GM10248 (cell line): ENCODE measurements at regions of chr5 and their contacts with region 1.

Region 1: DNA sequence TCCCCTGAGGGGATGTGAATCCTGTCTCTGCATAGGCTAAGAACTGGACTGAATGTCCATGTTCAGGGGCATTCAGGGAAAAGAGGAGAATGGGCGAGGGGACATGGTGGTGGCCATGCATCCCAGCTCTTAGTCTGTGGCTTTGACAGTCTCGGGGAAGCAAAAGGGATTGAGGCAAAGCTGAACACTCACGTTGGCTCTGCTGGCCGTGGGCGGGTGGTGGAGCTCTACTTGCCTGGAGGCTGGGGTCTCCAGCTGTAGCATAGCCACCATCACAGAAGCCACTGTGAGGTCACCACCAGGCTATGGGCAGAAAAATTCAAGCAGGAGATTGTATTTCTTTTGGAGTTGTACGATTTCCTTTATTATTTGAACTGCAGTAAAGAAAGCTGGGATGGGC is 4.1 kb downstream of the GARIN3 start:
- DNase-seq: no peak
- CTCF ChIP-seq: no peak

Region 2: GRCh38 chr5:157172403-157172802 is 10.4 kb after region 1 on chr5:
- CTCF ChIA-PET with region 1: interaction called, 12 read pairs
- POLR2A ChIA-PET with region 1: no interaction called
- DNase-seq: peak; percentile 82
- CTCF ChIP-seq: no peak

Region 3: DNA sequence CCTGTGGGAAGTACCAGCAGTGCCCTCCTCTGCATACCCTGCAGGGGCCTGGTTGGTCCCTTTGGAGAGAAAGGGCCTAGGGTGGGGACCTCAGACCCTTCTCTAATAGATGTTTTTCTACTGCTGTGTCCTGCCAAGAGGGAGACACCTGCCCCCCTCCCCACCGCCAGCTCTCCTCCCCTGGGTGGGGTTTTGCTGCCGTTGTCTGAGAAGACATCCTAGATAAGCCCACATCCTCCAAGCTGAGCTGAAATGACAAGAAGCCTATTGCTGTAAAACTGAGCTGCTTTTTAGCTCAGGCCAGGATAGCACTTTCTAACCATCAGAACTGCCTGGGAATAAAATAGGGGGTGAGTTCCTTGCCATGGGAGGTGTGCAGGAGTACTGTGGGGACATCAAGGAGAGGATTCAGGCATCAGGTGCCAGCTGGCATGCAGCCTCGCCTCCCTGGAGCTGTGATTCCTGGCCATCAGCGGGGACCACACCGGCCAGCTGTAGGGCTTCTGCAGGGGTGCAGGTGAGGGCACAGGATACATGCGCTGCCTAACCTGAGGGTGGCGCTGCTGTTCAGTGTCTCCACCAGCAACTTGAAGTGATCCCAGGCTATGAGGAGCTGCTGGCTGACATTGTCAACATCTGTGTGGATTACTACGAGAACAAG is 141.8 kb after region 1 on chr5:
- CTCF ChIA-PET with region 1: no interaction called
- POLR2A ChIA-PET with region 1: no interaction called
- DNase-seq: no peak
- CTCF ChIP-seq: peak; percentile 24